GM12878 (cell line): ENCODE measurements at regions of chr6 and their contacts with region 1.

Region 1: GRCh38 chr6:98777762-98778161 is 56.6 kb upstream of the POU3F2 start:
- DNase-seq: peak; percentile 31
- ATAC-seq: peak; percentile 98
- H3K4me3 ChIP-seq: no peak overlapping the region
- H3K27ac ChIP-seq: no peak overlapping the region
- H3K4me1 ChIP-seq: peaks cover 7% of the 10 kb centered on the region
- H3K27me3 ChIP-seq: no peaks in the 10 kb centered on the region; a peak in 1 of 4 replicates
- CTCF ChIP-seq: peak in 1 of 3 experiments; percentile 17; a peak in 1 of 6 replicates
- EP300 ChIP-seq: peak; percentile 40 to 59; a peak in 2 of 4 replicates
- POLR2A ChIP-seq: no peak
- RAD21 ChIP-seq: peak; percentile 36; the same call in 1 of the 2 replicates

Region 2: DNA sequence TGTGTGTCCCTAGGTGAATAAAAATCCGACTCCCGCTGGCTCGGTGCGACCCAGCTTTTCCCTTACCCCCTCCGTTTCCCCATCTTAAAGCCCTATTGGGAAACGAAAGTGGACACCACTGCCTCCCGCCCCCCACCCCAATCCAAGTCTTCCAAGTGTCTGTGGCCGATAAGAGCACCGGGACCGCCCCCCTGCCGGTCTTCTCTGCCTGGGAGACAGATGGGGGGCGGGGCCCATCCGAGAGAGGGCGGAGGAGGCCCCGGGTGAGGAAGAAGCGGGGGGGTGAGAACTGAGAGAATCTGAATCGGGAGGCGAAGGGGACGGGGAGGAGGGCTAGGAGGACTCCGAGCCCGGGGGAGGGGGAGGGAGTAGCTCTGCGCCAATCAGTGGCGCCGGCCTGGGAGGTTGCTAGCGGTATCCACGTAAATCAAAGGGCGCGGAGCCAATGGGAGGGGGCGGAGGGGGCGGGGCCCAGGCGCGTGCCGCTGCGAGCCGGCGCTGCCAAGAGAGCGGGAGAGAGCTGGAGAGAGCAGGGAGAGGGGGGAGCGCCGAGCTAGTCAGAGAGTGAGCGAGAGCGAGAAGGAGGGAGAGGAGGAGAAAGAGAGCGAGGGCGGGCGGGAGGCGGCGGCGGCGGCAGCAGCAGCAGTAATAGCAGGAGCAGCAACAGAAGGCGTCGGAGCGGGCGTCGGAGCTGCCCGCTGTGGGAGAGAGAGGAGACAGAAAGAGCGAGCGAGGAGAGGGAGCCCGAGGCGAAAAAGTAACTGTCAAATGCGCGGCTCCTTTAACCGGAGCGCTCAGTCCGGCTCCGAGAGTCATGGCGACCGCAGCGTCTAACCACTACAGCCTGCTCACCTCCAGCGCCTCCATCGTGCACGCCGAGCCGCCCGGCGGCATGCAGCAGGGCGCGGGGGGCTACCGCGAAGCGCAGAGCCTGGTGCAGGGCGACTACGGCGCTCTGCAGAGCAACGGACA is 56.6 kb after region 1 on chr6 and contains the start of gene POU3F2:
- CTCF ChIA-PET with region 1: no interaction called
- POLR2A ChIA-PET with region 1: no interaction called
- RAD21 ChIA-PET with region 1: interaction called, 3 read pairs
- SMC1A ChIA-PET with region 1: interaction called, 3 read pairs
- in situ Hi-C with region 1: no loop called
- intact Hi-C with region 1: loop called (anchors 5 kb)
- DNase-seq: no peak
- ATAC-seq: peak; percentile 86
- H3K4me3 ChIP-seq: peak within 1 kb of the TSS; percentile 64
- H3K27ac ChIP-seq: no peak within 1 kb of the TSS
- H3K4me1 ChIP-seq: no peaks in the 10 kb centered on the region
- H3K27me3 ChIP-seq: peaks cover 18 to 37% of the 10 kb centered on the region in 2 experiments
- CTCF ChIP-seq: no peak
- EP300 ChIP-seq: no peak
- POLR2A ChIP-seq: no peak
- RAD21 ChIP-seq: no peak
- polyA plus RNA-seq, gene POU3F2: not detected